Mammary epithelial cell (primary cell): ENCODE measurements at regions of chr14 and their contacts with region 1.

Region 1: DNA sequence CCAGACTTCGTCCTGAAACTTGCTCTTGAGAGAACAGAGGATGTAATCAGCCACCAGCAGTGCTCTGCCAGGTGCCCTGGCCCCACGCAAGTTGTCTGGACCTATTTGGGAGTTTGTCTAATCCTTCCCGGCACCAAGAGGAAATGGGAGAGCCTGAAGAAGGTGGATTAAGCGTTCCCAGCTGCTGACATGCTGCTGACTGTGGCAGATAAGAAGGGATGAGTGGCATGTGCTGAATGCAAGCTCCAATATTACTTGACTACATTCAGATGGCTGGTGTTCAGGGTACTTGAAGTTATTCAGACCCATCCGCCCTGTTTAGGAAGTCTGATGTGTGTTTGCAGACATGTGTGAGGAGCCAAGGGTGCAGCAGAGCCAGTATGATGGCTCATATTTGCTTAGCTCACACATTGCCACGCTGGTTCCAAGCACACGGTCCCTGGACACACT is 440.6 kb upstream of the CCDC196 start:
- DNase-seq: no peak
- H3K4me3 ChIP-seq: no peak overlapping the region
- H3K27ac ChIP-seq: no peak overlapping the region
- H3K4me1 ChIP-seq: no peaks in the 10 kb centered on the region
- H3K27me3 ChIP-seq: peaks cover 4% of the 10 kb centered on the region
- CTCF ChIP-seq: no peak

Region 2: GRCh38 chr14:66015071-66015780 is 30.4 kb before region 1 on chr14:
- CTCF ChIA-PET with region 1: no interaction called
- dilution Hi-C with region 1: loop called (anchors 5 kb)
- in situ Hi-C with region 1: no loop called
- intact Hi-C with region 1: no loop called
- DNase-seq: no peak
- H3K4me3 ChIP-seq: no peak overlapping the region
- H3K27ac ChIP-seq: no peak overlapping the region
- H3K4me1 ChIP-seq: no peaks in the 10 kb centered on the region
- H3K27me3 ChIP-seq: no peaks in the 10 kb centered on the region
- CTCF ChIP-seq: no peak

Region 3: GRCh38 chr14:66099931-66100330 is 54.3 kb after region 1 on chr14:
- CTCF ChIA-PET with region 1: no interaction called
- dilution Hi-C with region 1: loop called (anchors 5 kb)
- in situ Hi-C with region 1: no loop called
- intact Hi-C with region 1: no loop called
- DNase-seq: peak; percentile 21
- H3K4me3 ChIP-seq: no peak overlapping the region
- H3K27ac ChIP-seq: no peak overlapping the region
- H3K4me1 ChIP-seq: no peaks in the 10 kb centered on the region
- H3K27me3 ChIP-seq: peaks cover 2% of the 10 kb centered on the region
- CTCF ChIP-seq: no peak

Region 4: DNA sequence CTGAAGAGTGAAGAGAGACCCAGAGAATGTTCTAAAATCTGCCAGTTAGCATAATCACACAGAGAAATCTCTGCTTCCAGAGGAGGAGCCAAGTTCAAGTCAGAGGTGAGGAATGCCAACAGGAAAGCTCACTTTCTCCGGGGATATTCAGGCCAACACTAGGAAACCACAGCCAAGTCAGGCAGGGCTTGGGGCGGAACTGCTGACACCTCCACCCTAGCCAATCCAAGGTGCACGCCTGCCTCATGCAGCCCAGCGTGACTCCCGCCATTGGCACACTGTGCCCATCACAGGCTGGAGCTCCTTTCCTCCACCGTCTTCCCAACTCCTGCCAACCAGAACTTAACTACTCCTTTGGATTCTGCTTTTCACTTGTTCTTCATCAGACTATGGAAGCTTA is 66.3 kb after region 1 on chr14:
- CTCF ChIA-PET with region 1: no interaction called
- dilution Hi-C with region 1: no loop called
- in situ Hi-C with region 1: no loop called
- intact Hi-C with region 1: no loop called
- DNase-seq: no peak
- H3K4me3 ChIP-seq: no peak overlapping the region
- H3K27ac ChIP-seq: no peak overlapping the region
- H3K4me1 ChIP-seq: peaks cover 11% of the 10 kb centered on the region
- H3K27me3 ChIP-seq: no peaks in the 10 kb centered on the region
- CTCF ChIP-seq: no peak